CD8-positive, alpha-beta T cell (primary cell): ENCODE measurements at regions of chr15 and their contacts with region 1.

Region 1: GRCh38 chr15:79296583-79296982 is 14.1 kb downstream of the ANKRD34C start:
- DNase-seq: no peak
- ATAC-seq: no peak
- H3K4me3 ChIP-seq: no peak overlapping the region
- H3K4me3 Mint-ChIP-seq: no peak overlapping the region
- H3K27ac ChIP-seq: no peak overlapping the region
- H3K27ac Mint-ChIP-seq: no peak overlapping the region
- H3K4me1 ChIP-seq: no peaks in the 10 kb centered on the region
- H3K4me1 Mint-ChIP-seq: peaks cover under 1% of the 10 kb centered on the region
- H3K27me3 ChIP-seq: no peaks in the 10 kb centered on the region
- H3K27me3 Mint-ChIP-seq: peaks cover 17% of the 10 kb centered on the region
- CTCF ChIP-seq: no peak

Region 2: DNA sequence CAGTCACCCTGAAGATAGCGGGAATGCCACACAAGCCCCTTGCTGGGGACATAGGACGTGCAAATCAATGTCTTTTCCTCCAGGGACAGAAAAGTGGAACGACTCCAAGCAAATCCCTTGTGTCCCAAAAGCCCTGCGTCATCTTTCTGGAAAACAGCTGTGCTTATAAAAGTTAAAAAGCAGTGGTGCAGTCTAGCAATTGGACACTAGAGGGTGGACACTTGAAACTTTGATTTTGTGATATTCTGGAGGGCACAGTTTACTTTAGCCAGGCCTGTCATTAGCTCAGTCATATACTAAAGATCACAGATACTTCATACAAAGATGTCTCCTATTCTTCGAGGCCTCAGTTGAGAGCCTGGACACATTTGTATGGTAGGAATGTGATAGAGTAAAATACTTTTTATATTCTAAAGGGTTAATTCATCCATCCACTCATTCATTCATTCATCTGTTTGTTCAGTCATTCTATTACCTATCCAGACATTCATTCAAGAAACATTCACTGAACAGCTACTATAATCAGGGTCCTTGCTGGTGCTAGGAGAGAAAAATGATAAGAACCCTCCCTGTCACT is 77.9 kb before region 1 on chr15:
- CTCF ChIA-PET with region 1: no interaction called
- POLR2A ChIA-PET with region 1: no interaction called
- intact Hi-C with region 1: no loop called
- DNase-seq: no peak
- ATAC-seq: no peak
- H3K4me3 ChIP-seq: no peak overlapping the region
- H3K4me3 Mint-ChIP-seq: no peak overlapping the region
- H3K27ac ChIP-seq: no peak overlapping the region
- H3K27ac Mint-ChIP-seq: no peak overlapping the region
- H3K4me1 ChIP-seq: no peaks in the 10 kb centered on the region
- H3K4me1 Mint-ChIP-seq: no peaks in the 10 kb centered on the region
- H3K27me3 ChIP-seq: no peaks in the 10 kb centered on the region
- H3K27me3 Mint-ChIP-seq: peaks cover 18% of the 10 kb centered on the region
- CTCF ChIP-seq: no peak

Region 3: DNA sequence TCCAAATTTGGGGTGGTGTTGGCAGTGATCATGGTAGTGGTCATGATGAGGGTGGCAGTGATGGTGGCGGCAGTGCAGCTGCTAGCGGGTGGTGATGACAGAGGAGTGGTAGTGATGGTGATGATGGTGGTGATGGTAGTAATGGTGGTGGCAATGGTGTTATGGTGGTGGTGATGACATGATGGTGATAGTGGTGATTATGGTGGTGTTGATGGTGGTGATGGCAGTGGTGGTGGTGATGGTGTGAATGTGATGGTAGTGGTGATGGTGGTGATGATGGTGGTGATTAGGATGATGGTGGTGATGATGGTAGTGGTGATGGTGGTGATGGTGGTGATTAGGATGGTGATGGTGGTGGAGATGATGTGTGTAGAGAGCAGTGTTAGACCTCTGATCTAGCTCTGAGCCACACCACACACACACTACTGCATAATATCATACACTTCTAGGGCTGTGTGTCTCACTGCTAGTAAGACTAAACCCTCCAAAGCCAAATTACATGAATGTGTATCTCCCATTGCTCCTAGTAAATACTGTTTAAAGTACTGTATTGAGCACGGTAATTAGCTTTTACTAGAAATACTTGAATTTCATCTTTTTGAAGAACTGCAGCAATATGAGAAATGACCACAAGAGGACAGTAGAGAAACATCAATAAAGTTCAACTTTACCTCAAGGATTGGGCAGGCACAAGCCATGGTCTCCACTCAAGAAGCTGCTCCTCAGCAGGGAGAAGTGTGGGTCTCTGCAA is 43.2 kb after region 1 on chr15:
- CTCF ChIA-PET with region 1: interaction called, 4 read pairs
- POLR2A ChIA-PET with region 1: no interaction called
- intact Hi-C with region 1: loop called in 1 of 2 experiments (anchors 1 kb)
- DNase-seq: peak in 2 of 9 experiments; percentile 12 to 20
- ATAC-seq: no peak
- H3K4me3 ChIP-seq: no peak overlapping the region
- H3K4me3 Mint-ChIP-seq: no peak overlapping the region
- H3K27ac ChIP-seq: no peak overlapping the region
- H3K27ac Mint-ChIP-seq: no peak overlapping the region
- H3K4me1 ChIP-seq: no peaks in the 10 kb centered on the region
- H3K4me1 Mint-ChIP-seq: peaks cover 2% of the 10 kb centered on the region
- H3K27me3 ChIP-seq: no peaks in the 10 kb centered on the region
- H3K27me3 Mint-ChIP-seq: no peaks in the 10 kb centered on the region
- CTCF ChIP-seq: peak; percentile 59